Ascending aorta (tissue), 2 donors: ENCODE measurements at regions of chr1 and their contacts with region 1.

Region 1: GRCh38 chr1:10209905-10210810 is at the start of gene KIF1B:
- DNase-seq: peak; percentile 92 to 99
- H3K4me3 ChIP-seq: peak within 1 kb of the TSS; percentile 93 to 99
- H3K27ac ChIP-seq: peak within 1 kb of the TSS; percentile 99 to 100
- H3K4me1 ChIP-seq: peaks cover 0 to 28% of the 10 kb centered on the region in 2 donors
- H3K27me3 ChIP-seq: no peaks in the 10 kb centered on the region
- CTCF ChIP-seq: peak; percentile 97 to 99 (median 98)
- total RNA-seq, gene KIF1B: 13.4 TPM

Region 2: GRCh38 chr1:9942939-9943788 is 267.0 kb before region 1 on chr1 and contains the starts of genes LZIC and NMNAT1:
- intact Hi-C with region 1: loop called (anchors 1 kb)
- DNase-seq: peak; percentile 55 to 96
- H3K4me3 ChIP-seq: peak within 1 kb of the TSS; percentile 88 to 95
- H3K27ac ChIP-seq: peak within 1 kb of the TSS; percentile 84 to 85
- H3K4me1 ChIP-seq: peaks cover 0 to 17% of the 10 kb centered on the region in 2 donors
- H3K27me3 ChIP-seq: no peaks in the 10 kb centered on the region
- CTCF ChIP-seq: peak in 1 of 3 experiments; percentile 12
- total RNA-seq, gene LZIC: 3.7 TPM
- total RNA-seq, gene NMNAT1: 7.9 TPM

Region 3: DNA sequence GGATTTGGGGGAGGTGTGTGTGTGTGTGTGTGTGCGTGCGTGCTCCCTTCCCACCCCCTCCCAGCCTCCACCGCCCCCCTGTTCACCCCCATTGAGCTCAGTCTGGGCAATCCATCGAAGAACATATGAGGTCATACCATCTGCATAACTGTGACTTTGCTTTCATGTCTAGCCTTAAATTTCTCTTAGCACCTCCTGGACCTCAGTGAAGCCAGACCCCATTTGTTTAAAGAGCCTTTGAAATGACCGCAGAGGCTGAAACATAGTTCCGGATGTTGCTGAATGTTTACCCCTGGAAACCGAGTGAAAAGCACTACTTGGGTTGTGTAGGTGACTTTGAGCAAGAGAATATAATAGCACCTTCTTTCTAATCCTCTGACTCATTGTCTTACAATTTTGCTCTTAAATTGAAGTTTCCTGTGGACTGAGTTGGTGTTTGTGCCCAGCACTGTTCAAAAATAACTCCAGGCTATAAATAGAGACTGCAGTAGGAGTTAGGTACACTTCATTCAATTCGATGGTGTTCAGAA is 102.0 kb before region 1 on chr1:
- intact Hi-C with region 1: loop called (anchors 5 kb)
- DNase-seq: peak in 1 of 2 donors; percentile 77
- H3K4me3 ChIP-seq: peak overlapping the region in 1 of 2 donors; percentile 40
- H3K27ac ChIP-seq: peak overlapping the region; percentile 83 to 94
- H3K4me1 ChIP-seq: peaks cover 5 to 31% of the 10 kb centered on the region in 2 donors
- H3K27me3 ChIP-seq: no peaks in the 10 kb centered on the region
- CTCF ChIP-seq: no peak

Region 4: GRCh38 chr1:10195570-10195969 is 14.6 kb before region 1 on chr1:
- intact Hi-C with region 1: no loop called
- DNase-seq: no peak
- H3K4me3 ChIP-seq: no peak overlapping the region
- H3K27ac ChIP-seq: no peak overlapping the region
- H3K4me1 ChIP-seq: no peaks in the 10 kb centered on the region
- H3K27me3 ChIP-seq: no peaks in the 10 kb centered on the region
- CTCF ChIP-seq: no peak

Region 5: DNA sequence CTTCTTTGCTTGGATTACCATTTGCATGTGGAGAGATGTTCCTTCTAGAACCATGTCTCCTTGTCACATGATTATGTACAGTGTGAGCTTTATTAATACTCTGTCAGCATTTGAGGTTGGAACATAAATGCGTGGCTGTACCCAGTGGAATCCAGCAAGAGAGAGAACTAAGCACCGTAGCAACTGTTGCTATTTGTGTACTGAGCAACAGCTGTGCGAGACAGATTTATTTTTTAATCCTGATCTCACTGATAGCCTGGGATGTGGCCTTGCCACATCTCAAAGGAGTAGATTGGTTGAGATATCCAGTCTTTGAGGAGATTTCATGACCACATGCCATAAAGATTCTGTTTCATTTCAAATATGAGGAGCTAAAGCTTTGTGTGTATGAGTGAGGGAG is 43.6 kb after region 1 on chr1:
- intact Hi-C with region 1: loop called (anchors 5 kb)
- DNase-seq: peak in 1 of 2 donors; percentile 67
- H3K4me3 ChIP-seq: no peak overlapping the region
- H3K27ac ChIP-seq: peak overlapping the region; percentile 49 to 73
- H3K4me1 ChIP-seq: peaks cover 0 to 17% of the 10 kb centered on the region in 2 donors
- H3K27me3 ChIP-seq: no peaks in the 10 kb centered on the region
- CTCF ChIP-seq: no peak

Region 6: GRCh38 chr1:10338047-10338446 is 127.9 kb after region 1 on chr1:
- intact Hi-C with region 1: loop called (anchors 5 kb)
- DNase-seq: no peak
- H3K4me3 ChIP-seq: no peak overlapping the region
- H3K27ac ChIP-seq: no peak overlapping the region
- H3K4me1 ChIP-seq: no peaks in the 10 kb centered on the region
- H3K27me3 ChIP-seq: no peaks in the 10 kb centered on the region
- CTCF ChIP-seq: peak; percentile 61 to 84 (median 67)